Colonic mucosa (tissue), 4 donors: ENCODE measurements at regions of chr10 and their contacts with region 1.

Region 1: GRCh38 chr10:7525314-7526016 is 114.6 kb upstream of the SFMBT2 start:
- DNase-seq: peak; percentile 63
- H3K4me3 ChIP-seq: no peak overlapping the region
- H3K27ac ChIP-seq: no peak overlapping the region
- H3K4me1 ChIP-seq: no peaks in the 10 kb centered on the region
- H3K27me3 ChIP-seq: no peaks in the 10 kb centered on the region
- CTCF ChIP-seq: peak; percentile 62

Region 2: DNA sequence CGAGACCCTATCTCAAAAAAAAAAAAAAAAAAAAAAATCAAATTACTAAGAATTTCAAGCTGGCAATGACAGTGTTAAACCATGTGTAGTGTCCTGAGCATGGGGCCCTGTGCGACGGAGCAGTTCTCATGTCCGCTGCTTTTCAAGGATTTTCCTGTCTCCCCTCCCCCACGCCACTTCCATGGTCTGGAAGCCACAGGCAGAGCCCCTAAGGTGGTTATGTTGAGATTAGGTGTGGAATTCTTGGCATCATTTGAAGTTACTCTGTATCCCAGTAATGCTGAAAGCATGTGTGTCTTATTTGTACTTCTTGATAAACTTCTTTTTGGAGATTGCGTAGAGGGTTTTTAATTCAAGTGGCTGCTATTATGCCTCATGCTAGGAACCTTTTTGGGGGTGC is 1257.5 kb before region 1 on chr10:
- intact Hi-C with region 1: no loop called
- DNase-seq: no peak
- H3K4me3 ChIP-seq: no peak overlapping the region
- H3K27ac ChIP-seq: no peak overlapping the region
- H3K4me1 ChIP-seq: peaks cover 4% of the 10 kb centered on the region
- H3K27me3 ChIP-seq: no peaks in the 10 kb centered on the region
- CTCF ChIP-seq: no peak

Region 3: DNA sequence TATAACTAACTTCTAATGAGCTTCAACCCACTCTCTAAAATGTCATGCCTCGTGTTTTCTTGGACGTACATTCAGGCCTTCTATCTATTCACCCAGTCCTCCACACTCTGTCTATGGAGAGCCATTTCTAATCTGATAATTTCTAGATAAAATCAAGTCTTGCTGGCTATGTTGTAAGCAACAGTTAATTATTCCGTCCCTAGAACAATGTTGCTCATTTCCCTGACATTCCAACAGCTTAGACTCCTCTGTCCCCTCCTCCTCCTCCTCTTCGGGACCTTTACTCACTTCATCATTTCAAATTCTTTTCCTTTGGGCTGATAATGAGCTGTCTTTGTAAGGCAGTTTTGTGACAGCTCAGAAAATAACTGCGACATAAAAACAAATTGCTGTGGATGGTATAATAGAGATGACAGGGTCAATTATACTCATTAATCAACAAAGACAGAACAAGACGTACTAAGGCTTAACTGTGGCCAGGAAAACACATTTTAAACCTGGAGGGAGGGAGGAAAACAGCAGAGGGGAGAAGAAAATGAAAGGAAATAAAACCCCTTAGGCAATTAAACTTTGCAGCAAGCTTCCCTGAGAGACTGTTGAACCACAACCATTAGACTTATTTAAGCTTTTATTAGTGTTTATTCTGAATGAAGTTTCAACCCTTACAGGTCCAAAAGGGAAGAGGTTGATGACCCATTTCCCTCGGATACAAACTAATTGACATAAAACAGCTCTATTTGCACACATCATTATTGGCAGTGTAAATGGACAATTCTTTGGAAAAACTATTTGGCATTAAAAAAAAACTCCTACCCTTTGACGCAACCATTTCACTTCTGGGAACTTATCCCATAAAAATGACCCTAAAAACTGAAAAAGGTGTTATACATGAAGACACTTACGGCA is 293.7 kb before region 1 on chr10:
- intact Hi-C with region 1: no loop called
- DNase-seq: no peak
- H3K4me3 ChIP-seq: no peak overlapping the region
- H3K27ac ChIP-seq: no peak overlapping the region
- H3K4me1 ChIP-seq: no peaks in the 10 kb centered on the region
- H3K27me3 ChIP-seq: no peaks in the 10 kb centered on the region
- CTCF ChIP-seq: no peak

Region 4: GRCh38 chr10:7320072-7320471 is 205.4 kb before region 1 on chr10:
- intact Hi-C with region 1: no loop called
- DNase-seq: no peak
- H3K4me3 ChIP-seq: no peak overlapping the region
- H3K27ac ChIP-seq: no peak overlapping the region
- H3K4me1 ChIP-seq: no peaks in the 10 kb centered on the region
- H3K27me3 ChIP-seq: no peaks in the 10 kb centered on the region
- CTCF ChIP-seq: no peak

Region 5: DNA sequence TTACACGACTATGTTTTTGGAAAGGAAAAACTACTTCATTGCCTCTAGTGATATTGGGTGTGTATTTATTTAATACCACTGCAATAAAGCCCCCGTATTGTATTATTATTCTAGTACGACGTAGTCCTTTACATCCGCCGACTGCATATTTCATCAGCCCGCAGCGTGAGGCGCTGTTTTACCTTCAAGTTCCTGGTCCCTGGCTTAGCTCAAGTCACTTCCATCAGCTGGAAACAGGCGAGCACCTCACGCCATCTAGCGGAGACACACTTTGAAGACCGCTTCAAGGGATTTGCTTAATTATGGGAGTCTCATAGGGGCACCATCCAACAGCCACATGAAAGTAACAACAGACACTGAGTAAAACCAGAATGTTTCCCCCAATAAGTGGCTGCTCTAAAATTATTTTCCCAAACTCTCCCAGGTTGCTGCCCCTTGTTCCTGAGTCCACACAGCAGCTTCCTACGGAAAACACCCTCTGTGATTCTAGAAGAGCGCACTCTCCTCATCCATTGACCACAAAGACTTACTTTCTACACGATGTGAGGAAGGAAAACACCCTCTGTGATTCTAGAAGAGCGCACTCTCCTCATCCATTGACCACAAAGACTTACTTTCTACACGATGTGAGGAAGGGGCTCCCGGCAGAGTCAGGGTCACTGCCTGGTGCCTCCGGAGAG is 161.9 kb after region 1 on chr10:
- intact Hi-C with region 1: loop called (anchors 2 kb)
- DNase-seq: peak; percentile 79
- H3K4me3 ChIP-seq: no peak overlapping the region
- H3K27ac ChIP-seq: no peak overlapping the region
- H3K4me1 ChIP-seq: no peaks in the 10 kb centered on the region
- H3K27me3 ChIP-seq: no peaks in the 10 kb centered on the region
- CTCF ChIP-seq: peak; percentile 86

Region 6: DNA sequence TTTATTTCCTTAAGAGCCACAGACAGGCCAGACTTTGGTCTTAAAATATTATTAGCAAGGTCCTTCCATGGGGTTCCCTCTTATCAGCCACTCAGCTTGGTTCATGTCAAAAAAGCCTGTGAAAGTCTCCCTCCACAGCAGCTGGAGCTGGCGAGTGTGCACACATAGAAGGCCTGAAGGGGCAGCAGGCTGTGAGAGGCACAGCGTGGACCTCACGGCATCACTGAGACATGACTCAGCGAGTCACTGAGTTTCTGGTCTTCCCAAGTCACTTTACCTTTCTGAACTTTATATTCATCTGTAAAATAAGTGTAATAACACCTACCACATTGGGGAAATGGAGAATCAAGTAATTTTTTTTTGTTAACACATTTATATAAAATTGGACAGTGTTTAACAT is 301.5 kb after region 1 on chr10:
- intact Hi-C with region 1: no loop called
- DNase-seq: no peak
- H3K4me3 ChIP-seq: no peak overlapping the region
- H3K27ac ChIP-seq: no peak overlapping the region
- H3K4me1 ChIP-seq: no peaks in the 10 kb centered on the region
- H3K27me3 ChIP-seq: no peaks in the 10 kb centered on the region
- CTCF ChIP-seq: no peak